Prostate gland (tissue), 2 donors: ENCODE measurements at regions of chr12 and their contacts with region 1.

Region 1: GRCh38 chr12:119208622-119209061 is 29.9 kb downstream of the HSPB8 start:
- DNase-seq: peak; percentile 8
- H3K4me3 ChIP-seq: no peak overlapping the region
- H3K27ac ChIP-seq: no peak overlapping the region
- H3K4me1 ChIP-seq: no peaks in the 10 kb centered on the region
- H3K27me3 ChIP-seq: no peaks in the 10 kb centered on the region
- CTCF ChIP-seq: no peak
- POLR2A ChIP-seq: no peak

Region 2: DNA sequence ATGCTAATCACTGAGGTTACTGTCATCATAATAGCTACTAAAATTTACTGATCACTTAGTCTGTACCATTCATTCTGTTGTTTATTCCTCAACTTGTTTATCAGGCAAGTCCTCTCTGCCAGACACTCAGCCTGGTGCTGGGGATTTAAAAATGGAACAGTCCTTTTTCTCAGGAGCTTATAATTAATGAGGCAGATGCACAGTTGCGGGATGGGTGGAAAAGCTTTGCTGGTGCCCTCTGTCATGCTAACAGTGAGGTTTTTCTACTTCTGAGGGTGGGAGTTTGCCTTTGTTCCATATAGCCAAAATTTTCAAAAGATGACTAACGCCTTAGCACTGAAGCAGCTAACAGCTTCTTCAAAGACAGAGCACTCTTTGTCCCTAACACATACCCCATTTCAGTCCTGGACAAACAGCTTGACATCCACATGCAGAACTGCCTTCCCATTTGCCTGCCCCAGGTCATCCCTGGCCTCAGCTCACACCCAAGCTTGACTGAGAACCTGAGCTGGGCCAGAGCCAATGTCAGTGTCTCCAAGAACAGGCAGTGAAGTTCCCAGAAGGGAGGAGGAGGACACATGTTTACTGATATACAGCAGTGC is 60.7 kb before region 1 on chr12:
- intact Hi-C with region 1: no loop called
- DNase-seq: no peak
- H3K4me3 ChIP-seq: no peak overlapping the region
- H3K27ac ChIP-seq: no peak overlapping the region
- H3K4me1 ChIP-seq: no peaks in the 10 kb centered on the region
- H3K27me3 ChIP-seq: no peaks in the 10 kb centered on the region
- CTCF ChIP-seq: no peak
- POLR2A ChIP-seq: no peak

Region 3: GRCh38 chr12:119319638-119320037 is 111.0 kb after region 1 on chr12:
- intact Hi-C with region 1: loop called (anchors 10 kb)
- DNase-seq: peak; percentile 65
- H3K4me3 ChIP-seq: no peak overlapping the region
- H3K27ac ChIP-seq: no peak overlapping the region
- H3K4me1 ChIP-seq: no peaks in the 10 kb centered on the region
- H3K27me3 ChIP-seq: no peaks in the 10 kb centered on the region
- CTCF ChIP-seq: no peak
- POLR2A ChIP-seq: no peak

Region 4: DNA sequence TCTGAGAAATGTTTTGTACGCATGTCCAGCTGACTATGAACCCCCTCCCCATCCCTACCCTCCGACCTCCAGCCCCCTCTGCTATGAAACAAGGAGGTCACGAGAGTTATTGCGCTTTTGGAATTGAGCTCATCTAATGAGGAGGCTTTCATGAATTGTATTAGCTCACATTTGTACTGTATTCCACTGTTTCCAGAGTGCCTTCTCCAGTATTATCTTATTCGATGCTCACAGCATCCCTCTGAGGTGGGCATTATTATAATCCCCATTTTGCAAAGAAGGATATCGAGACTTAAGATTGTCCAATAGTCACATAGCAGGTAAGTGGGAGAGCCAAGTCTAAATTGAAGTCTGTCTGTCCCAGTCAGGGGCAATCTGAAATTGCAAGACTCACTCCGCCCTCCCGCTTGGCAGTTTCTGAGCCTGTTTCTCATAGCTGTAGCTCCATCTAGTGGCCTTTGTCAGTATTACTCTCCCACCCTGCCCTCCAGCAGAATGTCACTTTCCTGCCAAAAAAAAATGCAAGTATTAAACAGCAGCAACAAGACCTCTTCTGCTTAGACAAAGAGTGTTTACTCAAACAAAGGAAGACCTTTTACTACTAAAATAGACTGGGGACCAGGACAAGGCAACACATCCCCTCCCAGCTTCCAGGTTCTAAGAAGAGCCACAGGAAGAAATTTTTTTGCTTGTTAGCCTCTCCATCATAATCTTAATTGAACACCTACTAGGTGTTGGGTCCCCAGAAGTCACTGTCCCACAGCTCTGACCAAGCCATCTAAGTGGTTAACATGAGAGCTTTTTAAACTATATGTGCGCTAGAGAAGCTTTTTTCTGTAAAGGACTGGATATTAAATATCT is 336.4 kb after region 1 on chr12:
- intact Hi-C with region 1: no loop called
- DNase-seq: peak; percentile 67
- H3K4me3 ChIP-seq: no peak overlapping the region
- H3K27ac ChIP-seq: no peak overlapping the region
- H3K4me1 ChIP-seq: no peaks in the 10 kb centered on the region
- H3K27me3 ChIP-seq: no peaks in the 10 kb centered on the region
- CTCF ChIP-seq: peak; percentile 73 to 85 (median 82)
- POLR2A ChIP-seq: no peak